T-cell (primary cell): ENCODE measurements at regions of chr5 and their contacts with region 1.

Region 1: DNA sequence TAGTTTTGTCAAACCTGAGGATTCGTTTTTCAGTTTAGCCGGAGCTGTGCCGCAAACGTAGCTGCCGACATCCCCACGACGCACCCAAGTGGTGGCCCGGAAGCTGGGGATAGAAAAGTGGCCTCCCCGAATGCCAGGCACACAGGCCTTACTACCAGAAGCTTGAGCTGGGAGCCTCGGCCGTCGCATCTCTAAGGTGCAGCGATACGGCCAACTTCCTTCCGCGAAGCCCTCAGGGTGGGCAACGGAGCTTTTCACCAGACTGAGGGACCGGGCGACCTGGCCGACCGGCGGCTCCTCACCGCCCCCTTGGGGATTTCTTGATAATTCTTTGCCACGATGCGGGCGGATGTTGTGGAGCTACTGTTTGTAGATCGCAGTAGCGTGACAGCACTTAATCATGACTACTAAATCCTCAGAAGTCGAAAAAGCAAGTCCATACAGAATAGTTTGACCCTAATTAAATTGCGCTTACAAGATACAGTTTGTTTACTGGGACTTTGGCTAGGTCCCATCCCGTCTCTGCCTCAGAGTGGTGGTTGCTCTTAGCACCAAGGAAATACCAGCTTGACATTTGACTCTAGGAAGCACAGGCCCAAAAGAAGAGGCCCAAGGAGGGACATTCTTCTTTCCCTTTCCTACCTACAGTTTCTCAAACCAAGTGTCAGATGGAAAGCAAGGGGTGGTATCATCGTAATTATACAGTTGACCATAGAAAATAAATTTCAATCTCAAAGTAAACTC is 613 bp upstream of the TMEM267 start:
- DNase-seq: peak; percentile 75 to 91 (median 82)
- ATAC-seq: peak; percentile 73 to 77 (median 76)
- H3K4me3 ChIP-seq: peak overlapping the region; percentile 62 to 88
- H3K4me3 Mint-ChIP-seq: peak overlapping the region; percentile 89 to 99 (median 95)
- H3K27ac ChIP-seq: peak overlapping the region; percentile 93
- H3K27ac Mint-ChIP-seq: peak overlapping the region; percentile 100
- H3K4me1 ChIP-seq: peaks cover 9 to 25% of the 10 kb centered on the region in 2 experiments
- H3K4me1 Mint-ChIP-seq: peaks cover 50 to 55% (median 53%) of the 10 kb centered on the region in 3 donors
- H3K27me3 ChIP-seq: no peaks in the 10 kb centered on the region
- H3K27me3 Mint-ChIP-seq: no peaks in the 10 kb centered on the region

Region 2: DNA sequence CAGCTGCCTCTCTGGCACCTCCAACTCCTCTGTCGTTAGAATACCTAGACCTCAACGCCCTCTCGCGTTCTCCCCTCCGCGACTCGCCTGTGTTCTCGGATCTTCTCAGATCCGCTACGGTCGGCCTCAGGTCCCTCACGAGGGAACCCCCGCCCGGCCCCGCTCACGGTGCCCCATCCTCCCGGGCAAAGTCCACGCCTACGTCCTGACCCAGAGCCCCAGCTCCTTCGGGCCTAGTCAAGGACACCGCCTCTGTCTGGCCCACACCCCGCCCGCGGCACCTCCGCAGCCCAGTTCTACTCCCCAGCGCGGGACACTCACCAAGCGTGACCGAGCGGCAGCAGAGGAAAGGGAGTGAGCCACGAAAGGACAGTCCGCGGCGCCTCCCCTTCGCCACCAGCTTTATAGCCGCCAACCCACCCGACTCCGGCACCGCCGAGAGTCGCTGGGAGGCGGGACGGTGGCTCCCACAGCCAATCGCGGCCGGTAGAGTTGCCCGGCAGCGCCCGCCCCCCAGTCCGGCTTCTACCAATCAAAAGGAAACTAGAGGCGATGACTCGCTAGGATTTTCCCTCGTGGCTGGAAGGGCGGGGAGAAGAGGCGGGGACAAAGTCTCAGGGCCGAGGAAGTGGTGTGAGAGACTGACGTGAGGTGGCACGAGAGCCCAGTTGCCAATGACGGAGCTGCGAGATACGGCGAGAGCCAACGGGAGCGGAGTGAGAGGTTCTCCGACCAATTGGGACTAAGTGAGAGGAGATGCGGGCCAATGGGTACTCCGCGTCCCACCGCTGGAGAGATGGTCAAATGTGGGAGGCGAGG is 171.0 kb before region 1 on chr5 and contains the start of gene HMGCS1:
- CTCF ChIA-PET with region 1: interaction called, 4 to 36 read pairs
- POLR2A ChIA-PET with region 1: interaction called in 1 of 2 experiments, 78 read pairs
- DNase-seq: peak; percentile 96 to 100 (median 99)
- ATAC-seq: peak; percentile 89 to 92 (median 90)
- H3K4me3 ChIP-seq: peak within 1 kb of the TSS; percentile 81 to 88
- H3K4me3 Mint-ChIP-seq: peak within 1 kb of the TSS; percentile 93 to 95 (median 93)
- H3K27ac ChIP-seq: peak within 1 kb of the TSS; percentile 95
- H3K27ac Mint-ChIP-seq: peak within 1 kb of the TSS; percentile 84 to 97
- H3K4me1 ChIP-seq: peaks cover 12 to 14% of the 10 kb centered on the region in 2 experiments
- H3K4me1 Mint-ChIP-seq: peaks cover 27 to 48% (median 41%) of the 10 kb centered on the region in 3 donors
- H3K27me3 ChIP-seq: no peaks in the 10 kb centered on the region
- H3K27me3 Mint-ChIP-seq: no peaks in the 10 kb centered on the region
- total RNA-seq, gene HMGCS1: 29.2 to 49.1 (median 36.2) TPM

Region 3: GRCh38 chr5:43396762-43397304 is 87.4 kb before region 1 on chr5:
- CTCF ChIA-PET with region 1: interaction called, 8 to 15 read pairs
- POLR2A ChIA-PET with region 1: interaction called, 7 to 11 read pairs
- DNase-seq: peak; percentile 36 to 74 (median 58)
- ATAC-seq: peak; percentile 96 to 99 (median 98)
- H3K4me3 ChIP-seq: peak overlapping the region; percentile 84 to 92
- H3K4me3 Mint-ChIP-seq: peak overlapping the region; percentile 96 to 99 (median 99)
- H3K27ac ChIP-seq: peak overlapping the region; percentile 80
- H3K27ac Mint-ChIP-seq: peak overlapping the region; percentile 93 to 99
- H3K4me1 ChIP-seq: peaks cover 0 to 13% of the 10 kb centered on the region in 2 experiments
- H3K4me1 Mint-ChIP-seq: peaks cover 40 to 48% (median 42%) of the 10 kb centered on the region in 3 donors
- H3K27me3 ChIP-seq: no peaks in the 10 kb centered on the region
- H3K27me3 Mint-ChIP-seq: no peaks in the 10 kb centered on the region

Region 4: GRCh38 chr5:43514816-43515677 is 30.8 kb after region 1 on chr5 and contains the start of gene C5orf34:
- CTCF ChIA-PET with region 1: interaction called, 3 to 19 read pairs
- POLR2A ChIA-PET with region 1: interaction called, 4 to 11 read pairs
- DNase-seq: peak; percentile 76 to 96 (median 88)
- ATAC-seq: peak; percentile 95 to 98 (median 96)
- H3K4me3 ChIP-seq: peak within 1 kb of the TSS; percentile 70 to 99
- H3K4me3 Mint-ChIP-seq: peak within 1 kb of the TSS; percentile 92 to 94 (median 93)
- H3K27ac ChIP-seq: peak within 1 kb of the TSS; percentile 85
- H3K27ac Mint-ChIP-seq: peak within 1 kb of the TSS; percentile 93 to 97
- H3K4me1 ChIP-seq: peaks cover 2 to 17% of the 10 kb centered on the region in 2 experiments
- H3K4me1 Mint-ChIP-seq: peaks cover 34% of the 10 kb centered on the region in 3 donors
- H3K27me3 ChIP-seq: no peaks in the 10 kb centered on the region
- H3K27me3 Mint-ChIP-seq: no peaks in the 10 kb centered on the region
- total RNA-seq, gene C5orf34: 1.0 to 4.2 (median 2.8) TPM

Region 5: GRCh38 chr5:44932922-44933585 is 1448.8 kb after region 1 on chr5:
- CTCF ChIA-PET with region 1: no interaction called
- POLR2A ChIA-PET with region 1: no interaction called
- DNase-seq: no peak
- ATAC-seq: no peak
- H3K4me3 ChIP-seq: no peak overlapping the region
- H3K4me3 Mint-ChIP-seq: no peak overlapping the region
- H3K27ac ChIP-seq: no peak overlapping the region
- H3K27ac Mint-ChIP-seq: no peak overlapping the region
- H3K4me1 ChIP-seq: no peaks in the 10 kb centered on the region
- H3K4me1 Mint-ChIP-seq: no peaks in the 10 kb centered on the region
- H3K27me3 ChIP-seq: no peaks in the 10 kb centered on the region
- H3K27me3 Mint-ChIP-seq: peaks cover 0 to 1% of the 10 kb centered on the region in 2 donors